PC-9 (cell line): ENCODE measurements at regions of chr7 and their contacts with region 1.

Region 1: GRCh38 chr7:99072126-99072525 is 71.8 kb downstream of the SMURF1 start:
- DNase-seq: no peak
- H3K4me3 ChIP-seq: no peak overlapping the region
- H3K27ac ChIP-seq: peak overlapping the region; percentile 52; the same call in 1 of the 2 replicates
- H3K4me1 ChIP-seq: peaks cover 6% of the 10 kb centered on the region
- H3K27me3 ChIP-seq: no peaks in the 10 kb centered on the region
- CTCF ChIP-seq: no peak

Region 2: GRCh38 chr7:99001482-99002145 is 70.5 kb before region 1 on chr7:
- CTCF ChIA-PET with region 1: interaction called, 12 read pairs
- POLR2A ChIA-PET with region 1: no interaction called
- intact Hi-C with region 1: no loop called
- DNase-seq: no peak
- H3K4me3 ChIP-seq: no peak overlapping the region
- H3K27ac ChIP-seq: no peak overlapping the region
- H3K4me1 ChIP-seq: no peaks in the 10 kb centered on the region
- H3K27me3 ChIP-seq: no peaks in the 10 kb centered on the region
- CTCF ChIP-seq: no peak

Region 3: DNA sequence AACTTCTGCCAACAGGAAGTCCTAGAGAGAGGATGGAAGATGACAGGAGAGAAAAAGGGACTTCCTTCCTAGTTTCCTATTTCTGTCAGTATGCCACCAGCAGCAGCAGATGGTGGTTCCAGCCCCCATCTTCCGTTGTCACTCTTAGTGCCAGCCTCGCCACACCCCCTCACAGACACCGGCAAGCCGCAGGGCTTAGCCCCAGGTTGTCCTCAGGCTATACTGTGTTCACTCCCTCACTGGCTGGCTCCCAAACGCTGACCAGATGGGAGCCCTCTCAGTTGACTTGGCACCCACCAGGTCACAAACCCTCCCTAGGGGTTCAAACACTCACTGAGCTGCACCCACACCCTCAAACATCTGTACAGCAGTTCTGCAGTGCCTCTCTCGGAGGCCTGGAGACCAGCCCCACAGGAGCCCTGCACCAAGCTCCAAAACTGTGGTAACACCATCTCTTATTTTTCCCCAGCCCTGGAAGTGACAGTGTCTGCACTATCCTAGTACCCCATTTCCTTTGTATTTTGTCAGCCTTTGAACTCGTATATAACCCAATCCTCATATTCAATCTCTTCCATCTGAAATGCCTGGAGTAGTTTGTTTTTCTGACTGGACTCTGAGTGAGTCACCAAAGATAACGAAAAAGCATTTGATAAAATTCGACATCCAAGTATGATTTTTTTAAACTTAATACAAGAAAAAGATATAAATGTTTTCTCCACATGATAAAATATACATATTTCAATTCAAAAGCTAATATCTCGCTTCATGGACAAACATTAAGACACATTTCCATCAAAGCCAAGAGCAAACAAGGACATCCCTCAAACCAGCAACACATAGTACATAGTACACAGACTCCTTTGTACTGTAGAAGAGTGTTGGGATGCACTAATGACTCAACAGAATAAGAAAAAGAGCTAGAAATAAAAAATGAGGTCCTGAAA is 37.3 kb after region 1 on chr7:
- CTCF ChIA-PET with region 1: no interaction called
- POLR2A ChIA-PET with region 1: interaction called, 15 read pairs
- intact Hi-C with region 1: no loop called
- DNase-seq: peak; percentile 59 to 70
- H3K4me3 ChIP-seq: no peak overlapping the region
- H3K27ac ChIP-seq: peak overlapping the region; percentile 52
- H3K4me1 ChIP-seq: peaks cover 95% of the 10 kb centered on the region
- H3K27me3 ChIP-seq: no peaks in the 10 kb centered on the region
- CTCF ChIP-seq: no peak

Region 4: DNA sequence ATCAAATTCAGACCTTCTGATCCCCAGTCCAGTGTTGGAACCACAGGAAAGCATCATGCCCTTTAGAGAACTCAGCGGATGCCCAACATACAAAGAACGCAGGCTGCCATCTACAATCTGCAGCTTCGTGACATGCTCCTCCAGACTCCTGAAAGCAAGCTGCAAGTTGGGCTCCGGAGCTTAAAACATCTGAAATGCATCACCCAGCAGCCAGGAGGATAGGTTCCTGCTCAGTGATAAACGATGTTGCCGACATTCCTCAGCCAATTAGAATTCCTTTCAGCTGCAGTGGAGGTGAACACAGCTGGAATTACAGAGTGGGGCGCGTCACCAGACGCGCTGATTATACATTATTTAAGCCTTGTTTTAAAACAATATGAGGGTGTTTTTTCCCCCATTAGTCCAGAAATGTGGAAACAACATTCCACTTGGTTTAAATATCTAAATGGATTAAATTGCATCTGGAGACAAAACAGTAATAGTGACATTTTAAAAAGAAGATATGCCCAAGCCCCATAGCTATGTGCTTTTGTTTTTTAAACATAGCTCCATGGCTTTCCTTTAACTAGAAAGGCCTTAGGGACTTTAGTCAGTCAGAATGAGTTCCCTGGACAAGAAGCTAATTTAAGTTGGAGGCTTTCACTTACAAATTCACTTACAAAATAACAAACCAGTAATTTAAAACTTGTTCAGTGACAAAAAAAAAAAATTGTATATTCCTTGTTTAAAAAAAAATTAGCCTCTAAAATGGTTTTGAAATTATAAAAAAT is 65.5 kb after region 1 on chr7:
- CTCF ChIA-PET with region 1: no interaction called
- POLR2A ChIA-PET with region 1: no interaction called
- intact Hi-C with region 1: no loop called
- DNase-seq: no peak
- H3K4me3 ChIP-seq: no peak overlapping the region
- H3K27ac ChIP-seq: no peak overlapping the region
- H3K4me1 ChIP-seq: peaks cover 58% of the 10 kb centered on the region
- H3K27me3 ChIP-seq: no peaks in the 10 kb centered on the region
- CTCF ChIP-seq: no peak

Region 5: GRCh38 chr7:99558306-99559174 is 486.4 kb after region 1 on chr7 and contains the start of gene ZNF655:
- CTCF ChIA-PET with region 1: no interaction called
- POLR2A ChIA-PET with region 1: no interaction called
- intact Hi-C with region 1: no loop called
- DNase-seq: peak; percentile 52 to 84
- H3K4me3 ChIP-seq: peak within 1 kb of the TSS; percentile 83
- H3K27ac ChIP-seq: peak within 1 kb of the TSS; percentile 59
- H3K4me1 ChIP-seq: peaks cover 27% of the 10 kb centered on the region
- H3K27me3 ChIP-seq: no peaks in the 10 kb centered on the region
- CTCF ChIP-seq: no peak
- total RNA-seq, gene ZNF655: 75.6 and 83.0 TPM in 2 replicates